ENCODE measurements at regions of chr20 and their contacts with region 1.

Region 1: GRCh38 chr20:38073307-38074071 is 39.9 kb downstream of the RPRD1B start:
- DNase-seq: peak in 3 of 6 donors; percentile 17 to 43 (median 26)
- ATAC-seq: peak; percentile 61 to 93 (median 90)
- H3K4me3 ChIP-seq: no peak overlapping the region
- H3K27ac ChIP-seq: peak overlapping the region in 1 of 4 donors; percentile 6
- H3K4me1 ChIP-seq: peaks cover 3 to 10% (median 7%) of the 10 kb centered on the region in 3 donors
- H3K27me3 ChIP-seq: no peaks in the 10 kb centered on the region
- CTCF ChIP-seq: peak; percentile 45 to 59 (median 51)

Region 2: GRCh38 chr20:37984018-37984785 is 89.3 kb before region 1 on chr20:
- intact Hi-C with region 1: no loop called
- DNase-seq: no peak
- ATAC-seq: no peak
- H3K4me3 ChIP-seq: no peak overlapping the region
- H3K27ac ChIP-seq: no peak overlapping the region
- H3K4me1 ChIP-seq: peaks cover 0 to 24% (median 16%) of the 10 kb centered on the region in 3 donors
- H3K27me3 ChIP-seq: no peaks in the 10 kb centered on the region
- CTCF ChIP-seq: no peak

Region 3: DNA sequence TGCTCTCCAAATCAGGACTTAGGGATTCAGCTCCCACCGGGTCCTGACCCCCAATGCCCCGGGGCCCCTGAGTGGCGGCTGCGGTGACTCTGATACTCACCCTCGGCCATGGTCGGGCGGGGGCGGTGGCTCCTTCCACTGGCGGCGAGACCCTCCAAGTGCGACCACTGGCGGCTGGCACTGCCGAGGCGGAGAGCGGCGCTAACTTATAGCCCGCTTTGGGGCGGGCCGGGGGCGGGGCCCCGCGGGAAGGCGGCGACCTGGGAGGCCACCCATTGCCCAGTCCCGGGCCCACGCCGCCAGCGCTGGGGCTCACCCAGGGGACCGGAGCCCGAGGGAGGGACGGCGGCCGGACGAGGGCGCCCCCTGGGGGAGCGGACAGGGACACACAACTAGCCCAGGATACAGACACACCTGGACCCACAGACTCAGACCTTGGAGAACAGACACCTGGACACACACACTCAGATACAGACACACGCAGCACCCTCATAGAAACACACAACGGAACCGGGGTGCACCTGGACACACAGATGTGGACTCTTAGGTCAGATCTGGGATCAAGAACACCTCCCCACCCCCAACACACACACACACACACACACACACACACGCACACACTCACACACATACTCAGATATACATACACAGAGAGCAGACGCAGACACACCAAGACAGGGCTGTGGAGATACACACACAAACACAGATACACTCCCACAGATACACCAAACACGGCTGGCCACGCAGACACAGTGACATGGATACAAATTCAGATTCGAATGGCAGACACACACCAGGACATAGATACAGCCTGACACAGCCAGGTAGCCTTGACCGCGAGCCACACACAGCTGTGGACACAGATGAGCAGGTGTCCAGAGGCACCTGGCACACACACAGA is 91.8 kb after region 1 on chr20 and contains the start of gene TGM2:
- intact Hi-C with region 1: loop called in 2 of 3 experiments (anchors 5 kb)
- DNase-seq: peak; percentile 70 to 94 (median 82)
- ATAC-seq: peak; percentile 94 to 98 (median 96)
- H3K4me3 ChIP-seq: peak within 1 kb of the TSS in 3 of 4 donors; percentile 16 to 51 (median 20)
- H3K27ac ChIP-seq: no peak within 1 kb of the TSS
- H3K4me1 ChIP-seq: no peaks in the 10 kb centered on the region
- H3K27me3 ChIP-seq: no peaks in the 10 kb centered on the region
- CTCF ChIP-seq: peak; percentile 54 to 85 (median 84)
- total RNA-seq, gene TGM2: 3.7 to 92.6 (median 10.6) TPM